ENCODE measurements at regions of chr1 and their contacts with region 1.

Region 1: DNA sequence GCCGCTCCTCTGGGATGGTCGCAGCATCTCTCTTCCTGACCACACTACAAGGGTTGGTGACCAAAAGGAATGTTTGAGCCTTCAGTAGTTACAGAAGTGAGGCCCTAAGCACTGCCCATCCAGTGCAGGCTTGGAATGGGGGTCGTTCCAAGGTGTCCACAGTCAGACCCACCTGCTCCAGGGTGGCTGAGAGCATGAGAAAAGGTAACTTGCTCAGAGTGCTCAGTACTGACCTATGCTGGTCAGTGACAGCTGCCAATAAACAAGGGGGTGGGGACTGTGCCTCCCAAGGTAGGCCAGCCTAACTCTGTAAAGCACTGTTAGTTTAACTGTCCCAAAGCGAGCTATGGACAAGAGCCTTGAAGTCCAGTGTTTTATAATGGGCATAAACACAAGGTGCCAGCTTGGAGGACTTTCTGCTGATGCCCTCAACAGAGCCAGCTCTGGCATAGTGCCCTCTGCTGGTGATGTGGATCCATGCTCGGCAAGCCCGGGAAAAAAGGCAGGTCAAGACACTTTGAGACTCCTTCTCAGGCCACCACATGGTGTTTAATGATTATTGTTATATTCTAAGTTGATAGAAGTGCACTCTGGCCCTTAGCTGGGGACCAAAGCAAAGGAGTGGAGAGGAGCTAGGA is 78.1 kb upstream of the DNAH14 start:
- H3K4me3 ChIP-seq: no peak overlapping the region
- H3K27ac ChIP-seq: no peak overlapping the region
- H3K4me1 ChIP-seq: no peaks in the 10 kb centered on the region
- CTCF ChIP-seq: peak; percentile 83

Region 2: DNA sequence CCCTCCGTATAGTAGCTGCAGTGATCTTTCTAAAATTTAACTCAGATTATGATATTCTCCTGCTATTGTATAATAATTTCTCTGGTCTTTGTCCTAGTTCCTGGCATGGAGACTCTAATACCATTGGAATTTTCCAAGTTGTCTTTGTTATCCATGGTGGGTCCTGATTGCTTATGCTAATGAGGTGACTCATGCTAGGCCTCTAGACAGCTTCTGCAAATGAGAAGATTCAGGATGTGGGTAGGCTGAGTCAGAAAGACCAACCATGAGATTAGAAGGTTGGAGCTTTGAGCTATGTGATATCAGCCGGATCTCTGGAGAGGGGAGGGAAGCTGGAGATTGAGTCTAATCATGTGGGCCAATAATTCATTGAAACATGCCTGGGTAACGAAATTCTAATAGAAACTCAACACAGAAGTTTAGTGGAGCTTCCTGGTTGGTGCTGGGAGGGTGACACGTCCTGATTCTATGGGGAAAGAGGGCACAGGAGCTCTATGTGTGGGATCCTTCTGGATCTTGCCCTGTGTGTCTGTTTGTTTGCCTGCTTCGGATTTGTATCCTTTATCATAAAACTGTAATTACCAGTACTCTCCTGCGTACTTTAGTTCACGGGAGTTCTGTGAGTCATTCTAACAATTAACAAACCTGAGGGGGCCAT is 308.4 kb before region 1 on chr1:
- CTCF ChIA-PET with region 1: interaction called, 13 read pairs
- POLR2A ChIA-PET with region 1: no interaction called
- H3K4me3 ChIP-seq: no peak overlapping the region
- H3K27ac ChIP-seq: peak overlapping the region; percentile 39; the same call in 1 of the 2 replicates
- H3K4me1 ChIP-seq: peaks cover 30% of the 10 kb centered on the region
- CTCF ChIP-seq: no peak

Region 3: DNA sequence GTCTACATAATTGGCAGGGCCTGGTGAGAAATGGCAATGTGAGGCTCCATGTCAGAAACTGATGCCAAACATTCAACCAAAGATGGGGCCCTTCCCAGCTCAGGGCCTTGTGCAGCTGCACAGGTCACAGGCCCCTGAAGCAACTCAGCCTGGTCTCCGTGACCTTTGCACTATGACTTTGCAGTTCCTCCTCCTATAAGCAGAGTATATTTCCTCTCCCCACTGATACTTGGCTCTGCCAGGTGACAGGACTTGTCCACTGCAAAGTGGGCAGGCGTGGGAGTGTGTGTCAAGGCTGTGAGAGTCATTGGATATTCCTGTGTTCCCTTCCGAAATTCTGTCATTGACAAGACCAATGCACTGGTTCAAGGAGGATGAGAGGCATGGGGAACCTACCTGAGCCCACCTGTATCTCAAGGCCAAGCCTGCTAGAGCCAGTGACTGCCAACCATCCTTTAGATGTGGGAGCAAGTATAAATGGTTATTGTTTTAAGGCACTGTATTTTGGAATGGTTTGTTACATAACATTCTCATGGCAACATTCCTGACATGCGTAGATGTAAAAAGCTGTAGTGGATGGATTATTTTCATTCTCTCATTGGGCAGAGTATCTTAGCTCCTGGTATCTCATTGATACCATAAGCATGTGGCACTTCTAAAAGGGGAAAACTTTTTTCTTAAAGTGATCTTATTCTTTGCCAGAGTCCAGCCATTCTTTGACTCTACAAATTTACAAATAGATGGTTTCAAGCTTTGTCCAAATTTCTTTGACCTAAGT is 160.0 kb before region 1 on chr1:
- CTCF ChIA-PET with region 1: interaction called, 14 read pairs
- POLR2A ChIA-PET with region 1: no interaction called
- H3K4me3 ChIP-seq: no peak overlapping the region
- H3K27ac ChIP-seq: no peak overlapping the region
- H3K4me1 ChIP-seq: no peaks in the 10 kb centered on the region
- CTCF ChIP-seq: no peak

Region 4: DNA sequence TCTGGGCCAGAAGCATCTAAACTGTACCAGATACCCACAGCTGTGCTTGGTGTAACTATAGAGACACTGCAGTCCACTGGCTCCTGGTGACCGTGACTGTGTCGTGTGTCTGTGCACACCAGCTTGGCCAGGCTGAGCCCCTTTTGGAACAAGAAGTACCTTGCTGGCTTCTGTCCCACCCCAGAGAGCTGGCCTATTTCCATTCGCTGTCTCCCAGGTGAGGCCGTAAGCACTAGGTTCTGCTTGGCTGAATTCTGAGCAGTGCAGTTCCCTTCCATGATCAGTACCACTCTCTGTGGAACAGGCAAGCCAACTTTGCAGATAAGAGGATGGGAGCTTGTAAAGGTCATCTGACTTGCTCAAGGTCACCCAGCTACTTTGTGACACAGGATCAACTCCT is 41.7 kb before region 1 on chr1:
- CTCF ChIA-PET with region 1: interaction called, 17 read pairs
- POLR2A ChIA-PET with region 1: no interaction called
- H3K4me3 ChIP-seq: no peak overlapping the region
- H3K27ac ChIP-seq: no peak overlapping the region
- H3K4me1 ChIP-seq: no peaks in the 10 kb centered on the region
- CTCF ChIP-seq: no peak

Region 5: GRCh38 chr1:224873434-224874369 is 22.4 kb after region 1 on chr1:
- CTCF ChIA-PET with region 1: interaction called, 53 read pairs
- POLR2A ChIA-PET with region 1: no interaction called
- H3K4me3 ChIP-seq: no peak overlapping the region
- H3K27ac ChIP-seq: peak overlapping the region; percentile 64
- H3K4me1 ChIP-seq: peaks cover 31% of the 10 kb centered on the region
- CTCF ChIP-seq: no peak

Region 6: GRCh38 chr1:224914292-224914900 is 63.1 kb after region 1 on chr1:
- CTCF ChIA-PET with region 1: interaction called, 15 read pairs
- POLR2A ChIA-PET with region 1: no interaction called
- H3K4me3 ChIP-seq: no peak overlapping the region
- H3K27ac ChIP-seq: no peak overlapping the region
- H3K4me1 ChIP-seq: no peaks in the 10 kb centered on the region
- CTCF ChIP-seq: no peak

Measured in HEK293 (cell line).